ENCODE measurements at regions of chr10 and their contacts with region 1.

Region 1: GRCh38 chr10:24008164-24009091 is 200.5 kb upstream of the KIAA1217 start:
- DNase-seq: no peak
- H3K4me3 ChIP-seq: no peak overlapping the region
- H3K27ac ChIP-seq: peak overlapping the region in 2 of 3 donors; percentile 35 to 50
- H3K4me1 ChIP-seq: peaks cover 15 to 30% of the 10 kb centered on the region in 2 donors
- H3K27me3 ChIP-seq: no peaks in the 10 kb centered on the region
- CTCF ChIP-seq: no peak
- POLR2A ChIP-seq: no peak

Region 2: GRCh38 chr10:23834070-23834469 is 174.4 kb before region 1 on chr10:
- intact Hi-C with region 1: no loop called
- DNase-seq: no peak
- H3K4me3 ChIP-seq: no peak overlapping the region
- H3K27ac ChIP-seq: no peak overlapping the region
- H3K4me1 ChIP-seq: no peaks in the 10 kb centered on the region
- H3K27me3 ChIP-seq: no peaks in the 10 kb centered on the region
- CTCF ChIP-seq: no peak
- POLR2A ChIP-seq: no peak

Region 3: GRCh38 chr10:24054431-24054830 is 46.0 kb after region 1 on chr10:
- intact Hi-C with region 1: no loop called
- DNase-seq: no peak
- H3K4me3 ChIP-seq: no peak overlapping the region
- H3K27ac ChIP-seq: no peak overlapping the region
- H3K4me1 ChIP-seq: peaks cover 0 to 8% of the 10 kb centered on the region in 2 donors
- H3K27me3 ChIP-seq: no peaks in the 10 kb centered on the region
- CTCF ChIP-seq: no peak
- POLR2A ChIP-seq: no peak

Region 4: DNA sequence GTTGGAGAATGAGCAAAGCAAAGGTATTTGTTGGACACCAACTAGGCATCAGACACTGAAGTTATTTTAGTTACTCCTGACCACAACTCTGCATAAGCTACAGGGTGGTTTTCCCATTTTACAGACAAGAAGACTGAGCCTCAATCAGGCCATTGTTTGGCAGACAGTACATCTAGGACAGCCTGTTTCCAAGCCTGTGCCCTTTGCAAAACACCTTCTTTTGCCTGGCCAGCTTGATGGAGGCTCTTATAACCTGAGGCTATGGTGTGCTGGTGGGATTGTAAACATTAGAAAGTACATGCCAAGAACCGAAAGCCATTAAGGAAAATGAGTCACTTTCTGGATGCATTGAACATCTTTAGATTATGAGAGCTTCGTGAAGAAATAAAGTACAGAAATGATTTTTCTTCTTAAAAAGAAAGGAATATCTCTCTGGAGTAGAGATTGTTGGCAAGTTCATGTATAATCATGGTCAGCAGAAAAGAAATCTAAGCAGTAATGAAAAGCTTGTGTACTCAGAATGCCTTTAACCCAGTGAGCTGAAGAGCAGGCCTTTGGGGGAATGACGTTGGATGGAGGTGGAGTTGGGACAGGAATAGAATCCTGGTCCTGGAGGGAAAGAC is 341.1 kb after region 1 on chr10:
- intact Hi-C with region 1: loop called (anchors 10 kb)
- DNase-seq: peak; percentile 32 to 47
- H3K4me3 ChIP-seq: no peak overlapping the region
- H3K27ac ChIP-seq: peak overlapping the region; percentile 32 to 81 (median 66)
- H3K4me1 ChIP-seq: peaks cover 27 to 59% of the 10 kb centered on the region in 2 donors
- H3K27me3 ChIP-seq: no peaks in the 10 kb centered on the region
- CTCF ChIP-seq: no peak
- POLR2A ChIP-seq: no peak